Mammary epithelial cell (primary cell): ENCODE measurements at regions of chr4 and their contacts with region 1.

Region 1: DNA sequence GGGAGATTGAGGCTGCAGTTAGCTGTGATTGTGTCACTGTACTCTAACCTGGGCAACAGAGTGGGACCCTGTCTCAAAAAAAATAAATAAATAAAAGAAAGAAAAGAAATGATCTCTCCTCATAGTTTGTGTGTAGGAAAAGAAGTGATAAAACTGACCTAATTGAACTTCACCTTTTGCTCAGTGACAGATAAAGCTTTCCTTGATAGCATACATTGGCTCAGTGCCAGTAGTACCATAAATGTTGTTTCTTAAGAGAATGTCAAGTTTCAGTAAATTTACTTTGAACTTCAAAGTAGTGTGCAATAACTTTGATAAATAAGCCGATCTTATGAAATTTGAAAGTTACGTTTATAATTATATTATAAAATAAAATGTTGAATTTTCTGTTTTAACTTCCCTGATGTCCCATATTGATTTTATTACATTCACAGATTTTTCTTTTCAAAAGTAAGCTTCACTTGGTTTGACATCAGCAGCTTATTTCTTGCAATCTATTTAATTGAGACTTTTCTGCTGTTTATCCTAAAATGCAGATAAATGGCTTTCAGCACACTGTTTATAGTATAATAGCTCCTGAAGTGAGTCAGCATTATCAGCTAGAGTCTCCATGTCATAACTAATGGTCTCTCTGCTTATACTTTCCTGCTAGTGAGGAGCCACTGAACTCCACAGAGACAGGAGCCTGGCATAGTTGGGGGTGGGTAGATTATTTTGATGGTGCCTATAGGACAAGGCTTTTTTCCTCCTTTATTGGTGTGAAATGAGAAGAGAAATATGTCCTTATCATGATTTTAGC is 330.1 kb downstream of the BMPR1B start:
- DNase-seq: no peak
- H3K4me3 ChIP-seq: no peak overlapping the region
- H3K27ac ChIP-seq: no peak overlapping the region
- H3K4me1 ChIP-seq: peaks cover 39% of the 10 kb centered on the region
- H3K27me3 ChIP-seq: no peaks in the 10 kb centered on the region
- CTCF ChIP-seq: no peak

Region 2: GRCh38 chr4:94766856-94767255 is 321.0 kb before region 1 on chr4:
- CTCF ChIA-PET with region 1: no interaction called
- dilution Hi-C with region 1: no loop called
- in situ Hi-C with region 1: loop called in 1 of 2 experiments (anchors 10 kb)
- intact Hi-C with region 1: no loop called
- DNase-seq: peak; percentile 82
- H3K4me3 ChIP-seq: no peak overlapping the region
- H3K27ac ChIP-seq: no peak overlapping the region
- H3K4me1 ChIP-seq: peaks cover 11% of the 10 kb centered on the region
- H3K27me3 ChIP-seq: no peaks in the 10 kb centered on the region
- CTCF ChIP-seq: no peak

Region 3: GRCh38 chr4:94827481-94828110 is 260.3 kb before region 1 on chr4:
- CTCF ChIA-PET with region 1: no interaction called
- dilution Hi-C with region 1: no loop called
- in situ Hi-C with region 1: no loop called
- intact Hi-C with region 1: loop called (anchors 5 kb)
- DNase-seq: peak; percentile 88
- H3K4me3 ChIP-seq: peak overlapping the region in 2 of 3 experiments; percentile 31 to 45
- H3K27ac ChIP-seq: peak overlapping the region; percentile 92
- H3K4me1 ChIP-seq: peaks cover 25% of the 10 kb centered on the region
- H3K27me3 ChIP-seq: no peaks in the 10 kb centered on the region
- CTCF ChIP-seq: no peak

Region 4: GRCh38 chr4:95348418-95348817 is 260.6 kb after region 1 on chr4:
- CTCF ChIA-PET with region 1: no interaction called
- dilution Hi-C with region 1: no loop called
- in situ Hi-C with region 1: no loop called
- intact Hi-C with region 1: no loop called
- DNase-seq: no peak
- H3K4me3 ChIP-seq: no peak overlapping the region
- H3K27ac ChIP-seq: no peak overlapping the region
- H3K4me1 ChIP-seq: no peaks in the 10 kb centered on the region
- H3K27me3 ChIP-seq: no peaks in the 10 kb centered on the region
- CTCF ChIP-seq: no peak